Posterior vena cava (tissue), 2 donors: ENCODE measurements at regions of chr6 and their contacts with region 1.

Region 1: GRCh38 chr6:158776737-158777136 is 42.4 kb downstream of the EZR start:
- DNase-seq: no peak

Region 2: DNA sequence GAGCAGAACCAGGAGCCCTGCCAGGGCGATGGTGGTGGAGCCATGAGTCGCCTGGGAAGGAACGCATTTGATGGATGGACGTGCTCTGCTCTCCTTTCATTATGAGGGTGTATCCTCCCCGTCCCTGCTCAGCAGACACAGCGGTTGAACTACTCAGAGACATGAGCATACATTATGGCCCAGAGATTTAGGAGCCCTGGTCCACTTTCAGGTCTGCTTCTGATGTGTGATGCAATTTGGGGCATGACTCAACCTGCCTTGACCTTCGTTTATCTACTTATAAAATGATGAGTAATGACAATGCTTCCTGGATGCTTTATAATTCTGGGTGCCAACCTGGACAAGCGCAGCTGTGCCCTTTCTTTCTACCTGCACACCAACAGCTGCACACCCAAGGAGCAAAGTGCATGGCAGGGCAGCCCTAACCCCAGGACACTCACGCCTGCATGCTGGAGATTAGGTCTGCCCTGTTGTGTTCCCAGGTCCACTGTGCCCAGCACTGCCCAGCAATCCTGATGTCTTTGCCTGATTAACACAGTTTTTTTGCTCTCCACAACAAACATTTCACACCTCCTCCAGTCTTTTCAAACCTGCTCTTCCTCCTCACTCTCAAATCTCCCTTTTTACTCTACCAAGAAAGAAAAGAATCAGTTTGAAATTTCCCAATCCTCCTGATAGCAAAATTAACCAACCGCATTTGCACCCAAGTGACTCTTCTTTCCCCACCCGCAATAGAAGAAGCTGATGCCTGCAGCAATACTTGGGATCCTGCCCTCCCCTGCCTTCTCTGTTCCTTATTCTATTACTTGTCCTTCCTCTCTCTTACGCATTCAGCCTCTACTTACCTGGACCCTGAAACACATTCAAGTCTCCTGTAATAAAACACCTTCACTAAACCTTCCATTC is 38.8 kb before region 1 on chr6:
- intact Hi-C with region 1: loop called in 1 of 2 experiments (anchors 1 kb)
- DNase-seq: peak; percentile 60